Activated CD8-positive, alpha-beta memory T cell treated with anti-CD3 and anti-CD28 coated beads, Interleukin-2, amount 10 ng/mL, durations not matched to agents 7 days and 5 days (primary cell): ENCODE measurements at regions of chr12 and their contacts with region 1.

Region 1: DNA sequence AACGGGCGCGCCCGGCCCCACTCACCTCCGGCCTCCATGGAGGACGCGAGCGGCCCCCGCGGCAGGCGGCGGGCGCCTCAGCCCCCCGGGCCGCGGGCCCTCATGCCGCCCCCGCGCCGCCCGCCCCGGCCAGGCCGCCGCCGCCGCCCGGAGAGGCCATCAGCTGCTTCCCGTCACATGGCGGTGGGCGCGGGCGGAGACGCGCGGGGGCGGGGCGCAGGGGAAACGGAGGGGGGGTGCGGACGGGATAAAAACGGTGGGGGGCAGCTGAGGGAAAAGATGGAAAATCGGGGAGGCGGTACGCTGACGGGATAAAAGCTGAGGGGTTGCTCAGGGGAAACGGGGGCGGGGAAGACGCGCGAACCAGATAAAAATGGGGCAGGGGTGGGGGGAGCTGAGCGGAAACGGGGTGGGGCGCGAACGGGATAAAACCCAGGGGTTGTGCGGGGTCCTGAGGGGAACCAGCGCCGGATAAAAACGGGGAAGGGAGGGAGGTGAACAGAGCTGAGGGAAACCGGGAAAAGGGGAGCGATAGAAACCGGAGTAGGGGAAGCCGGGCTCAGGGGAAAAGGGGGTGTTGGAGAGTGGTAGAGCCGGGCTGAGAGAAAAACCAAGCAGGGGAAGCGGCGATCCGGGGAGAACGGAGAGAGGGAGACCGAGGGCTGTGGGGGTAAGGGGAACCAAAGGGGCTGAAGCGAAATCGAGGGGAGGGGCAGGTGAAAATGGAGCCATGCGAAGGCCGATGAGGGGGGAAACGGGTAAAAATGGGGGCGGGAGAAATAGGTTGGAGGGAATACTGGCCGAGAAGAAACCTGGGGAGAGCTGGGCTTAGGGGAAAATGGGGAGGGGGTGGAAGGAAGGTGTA is at the start of gene WSB2:
- DNase-seq: peak; percentile 67
- ATAC-seq: peak; percentile 50
- H3K4me3 Mint-ChIP-seq: peak within 1 kb of the TSS; percentile 84
- H3K27ac Mint-ChIP-seq: peak within 1 kb of the TSS; percentile 93
- H3K4me1 Mint-ChIP-seq: peaks cover 53% of the 10 kb centered on the region
- H3K27me3 Mint-ChIP-seq: peaks cover 4% of the 10 kb centered on the region
- total RNA-seq, gene WSB2: 44.1 to 52.1 TPM

Region 2: GRCh38 chr12:117874842-117875434 is 186.3 kb before region 1 on chr12:
- CTCF ChIA-PET with region 1: interaction called, 10 read pairs
- DNase-seq: peak; percentile 74
- ATAC-seq: peak; percentile 67
- H3K4me3 Mint-ChIP-seq: no peak overlapping the region
- H3K27ac Mint-ChIP-seq: peak overlapping the region; percentile 54
- H3K4me1 Mint-ChIP-seq: peaks cover 5% of the 10 kb centered on the region
- H3K27me3 Mint-ChIP-seq: peaks cover 23% of the 10 kb centered on the region

Region 3: DNA sequence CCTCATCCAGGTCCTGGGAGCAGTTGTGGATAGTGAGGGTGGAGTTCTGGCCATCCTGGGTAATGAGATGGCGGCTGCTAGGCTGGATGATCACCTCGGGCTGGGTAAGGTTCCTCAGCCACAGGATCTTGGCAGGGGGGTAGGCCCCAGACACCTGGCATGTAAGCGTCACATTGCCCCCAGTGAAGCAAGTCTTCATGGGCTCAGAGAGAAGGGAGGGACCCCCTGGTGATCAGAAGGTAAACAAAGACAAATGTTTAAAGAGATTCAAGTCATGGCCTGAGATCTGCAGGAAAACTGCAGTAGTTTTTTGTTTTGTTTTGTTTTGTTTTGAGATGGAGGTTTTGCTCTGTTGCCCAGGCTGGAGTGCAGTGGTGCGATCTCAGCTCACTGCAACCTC is 12.5 kb after region 1 on chr12:
- CTCF ChIA-PET with region 1: interaction called, 14 read pairs
- DNase-seq: no peak
- ATAC-seq: no peak
- H3K4me3 Mint-ChIP-seq: no peak overlapping the region
- H3K27ac Mint-ChIP-seq: no peak overlapping the region
- H3K4me1 Mint-ChIP-seq: peaks cover 1% of the 10 kb centered on the region
- H3K27me3 Mint-ChIP-seq: no peaks in the 10 kb centered on the region

Region 4: GRCh38 chr12:118135788-118136558 is 74.7 kb after region 1 on chr12 and contains the start of gene PEBP1:
- CTCF ChIA-PET with region 1: interaction called, 15 read pairs
- DNase-seq: peak; percentile 95
- ATAC-seq: peak; percentile 100
- H3K4me3 Mint-ChIP-seq: peak within 1 kb of the TSS; percentile 87
- H3K27ac Mint-ChIP-seq: peak within 1 kb of the TSS; percentile 86
- H3K4me1 Mint-ChIP-seq: peaks cover 36% of the 10 kb centered on the region
- H3K27me3 Mint-ChIP-seq: no peaks in the 10 kb centered on the region
- total RNA-seq, gene PEBP1: 93.7 to 136 TPM